ENCODE measurements at regions of chr15 and their contacts with region 1.

Region 1: GRCh38 chr15:100111103-100112060 is 230.4 kb downstream of the ADAMTS17 start:
- DNase-seq: peak; percentile 76
- H3K4me3 Mint-ChIP-seq: peak overlapping the region; percentile 44
- H3K27ac Mint-ChIP-seq: peak overlapping the region; percentile 98
- H3K4me1 Mint-ChIP-seq: peaks cover 41% of the 10 kb centered on the region
- H3K27me3 Mint-ChIP-seq: no peaks in the 10 kb centered on the region

Region 2: GRCh38 chr15:98927022-98927421 is 1184.4 kb before region 1 on chr15:
- CTCF ChIA-PET with region 1: no interaction called
- intact Hi-C with region 1: no loop called
- DNase-seq: no peak
- H3K4me3 Mint-ChIP-seq: no peak overlapping the region
- H3K27ac Mint-ChIP-seq: no peak overlapping the region
- H3K4me1 Mint-ChIP-seq: no peaks in the 10 kb centered on the region
- H3K27me3 Mint-ChIP-seq: no peaks in the 10 kb centered on the region

Region 3: DNA sequence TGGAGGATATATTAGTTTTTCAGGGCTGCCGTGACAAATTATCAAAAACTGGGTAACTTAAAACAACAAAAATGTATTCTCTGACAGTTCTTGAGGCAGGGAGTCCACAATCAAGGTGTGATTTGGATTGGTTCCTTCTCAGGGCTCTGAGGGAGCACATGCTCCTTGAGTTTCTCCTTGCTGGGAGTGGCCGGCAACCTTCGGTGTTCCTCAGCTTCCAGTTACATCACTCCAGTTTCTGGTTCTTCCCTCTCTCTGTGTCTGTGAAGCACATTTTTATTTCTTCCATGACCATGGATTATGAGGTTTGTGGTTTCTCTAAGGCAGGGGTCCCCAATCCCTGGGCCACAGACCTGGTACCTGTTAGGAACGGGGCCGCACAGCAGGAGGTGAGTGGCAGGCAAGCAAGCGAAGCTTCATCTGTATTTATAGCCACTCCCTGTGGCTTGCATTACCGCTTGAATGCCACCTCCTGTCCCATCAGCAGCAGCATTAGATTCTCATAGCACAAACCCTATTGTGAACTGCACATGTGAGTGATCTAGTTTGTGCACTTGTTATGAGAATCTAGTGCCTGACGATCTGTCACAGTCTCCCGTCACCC is 835.8 kb before region 1 on chr15:
- CTCF ChIA-PET with region 1: no interaction called
- intact Hi-C with region 1: loop called (anchors 5 kb)
- DNase-seq: no peak
- H3K4me3 Mint-ChIP-seq: no peak overlapping the region
- H3K27ac Mint-ChIP-seq: no peak overlapping the region
- H3K4me1 Mint-ChIP-seq: peaks cover 27% of the 10 kb centered on the region
- H3K27me3 Mint-ChIP-seq: no peaks in the 10 kb centered on the region

Region 4: GRCh38 chr15:99826157-99826780 is 285.1 kb before region 1 on chr15:
- CTCF ChIA-PET with region 1: no interaction called
- intact Hi-C with region 1: loop called (anchors 5 kb)
- DNase-seq: peak; percentile 58
- H3K4me3 Mint-ChIP-seq: peak overlapping the region; percentile 22
- H3K27ac Mint-ChIP-seq: peak overlapping the region; percentile 93
- H3K4me1 Mint-ChIP-seq: peaks cover 53% of the 10 kb centered on the region
- H3K27me3 Mint-ChIP-seq: no peaks in the 10 kb centered on the region

Region 5: DNA sequence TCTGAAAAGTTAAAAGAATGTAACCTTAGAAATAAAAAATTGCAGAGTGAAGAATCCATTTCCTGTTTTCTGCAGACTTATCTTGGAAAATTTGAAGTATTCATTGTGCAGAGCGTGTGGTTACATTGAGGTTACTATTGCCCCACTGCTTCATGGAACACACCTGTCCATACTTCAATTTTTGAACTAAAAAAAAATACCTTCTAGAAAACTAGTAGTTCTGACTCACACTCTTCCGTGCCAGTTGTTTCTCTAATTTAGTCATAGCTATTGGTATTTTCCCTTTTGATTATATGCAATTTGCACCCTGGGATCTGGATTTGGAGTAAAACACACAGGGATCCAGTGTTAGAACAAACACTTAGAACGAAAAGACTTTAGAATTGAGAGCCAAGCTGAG is 266.4 kb before region 1 on chr15:
- CTCF ChIA-PET with region 1: no interaction called
- intact Hi-C with region 1: loop called (anchors 5 kb)
- DNase-seq: peak; percentile 66
- H3K4me3 Mint-ChIP-seq: no peak overlapping the region
- H3K27ac Mint-ChIP-seq: peak overlapping the region; percentile 62
- H3K4me1 Mint-ChIP-seq: peaks cover 57% of the 10 kb centered on the region
- H3K27me3 Mint-ChIP-seq: no peaks in the 10 kb centered on the region

Region 6: DNA sequence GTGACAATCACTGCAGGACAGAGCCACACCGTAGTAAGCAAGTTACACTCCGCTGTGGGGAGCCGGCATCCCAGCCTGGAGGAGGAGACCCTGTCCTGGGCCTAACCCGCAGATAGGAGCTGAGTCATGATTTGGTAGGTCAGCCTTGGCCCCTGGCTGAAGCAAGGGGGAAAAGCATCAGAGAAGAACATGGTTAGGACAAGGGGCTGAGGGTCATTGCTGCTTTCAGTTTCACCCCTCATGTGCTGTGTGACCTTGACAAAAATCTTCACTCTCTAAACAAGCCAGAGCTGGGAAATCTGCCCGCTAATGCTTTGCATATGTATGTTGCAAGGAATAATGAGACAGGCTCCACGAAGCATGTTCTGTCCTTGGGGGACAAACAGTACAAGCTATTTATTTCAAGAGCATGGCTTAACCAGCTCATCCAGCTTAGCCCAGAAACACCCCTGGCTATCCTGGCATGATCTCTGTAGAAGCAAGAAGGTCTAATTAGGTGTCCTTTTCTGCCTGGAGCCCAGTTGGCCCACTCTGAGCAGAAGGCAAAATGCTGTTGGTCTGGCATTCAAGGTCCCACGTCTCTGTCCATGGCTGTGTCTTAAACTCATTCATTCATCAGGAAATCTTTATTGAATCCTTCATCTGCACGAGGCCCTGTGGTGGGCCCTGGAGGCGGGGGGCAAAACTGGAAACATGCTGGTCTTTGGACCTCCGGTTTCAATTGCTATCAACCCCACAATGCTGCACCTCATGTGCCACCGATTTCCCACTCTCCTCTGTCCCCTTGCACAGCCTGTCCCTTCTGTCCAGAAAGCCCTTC is 156.8 kb before region 1 on chr15:
- CTCF ChIA-PET with region 1: no interaction called
- intact Hi-C with region 1: loop called (anchors 5 kb)
- DNase-seq: no peak
- H3K4me3 Mint-ChIP-seq: no peak overlapping the region
- H3K27ac Mint-ChIP-seq: no peak overlapping the region
- H3K4me1 Mint-ChIP-seq: peaks cover 14% of the 10 kb centered on the region
- H3K27me3 Mint-ChIP-seq: peaks cover 2% of the 10 kb centered on the region

Region 7: DNA sequence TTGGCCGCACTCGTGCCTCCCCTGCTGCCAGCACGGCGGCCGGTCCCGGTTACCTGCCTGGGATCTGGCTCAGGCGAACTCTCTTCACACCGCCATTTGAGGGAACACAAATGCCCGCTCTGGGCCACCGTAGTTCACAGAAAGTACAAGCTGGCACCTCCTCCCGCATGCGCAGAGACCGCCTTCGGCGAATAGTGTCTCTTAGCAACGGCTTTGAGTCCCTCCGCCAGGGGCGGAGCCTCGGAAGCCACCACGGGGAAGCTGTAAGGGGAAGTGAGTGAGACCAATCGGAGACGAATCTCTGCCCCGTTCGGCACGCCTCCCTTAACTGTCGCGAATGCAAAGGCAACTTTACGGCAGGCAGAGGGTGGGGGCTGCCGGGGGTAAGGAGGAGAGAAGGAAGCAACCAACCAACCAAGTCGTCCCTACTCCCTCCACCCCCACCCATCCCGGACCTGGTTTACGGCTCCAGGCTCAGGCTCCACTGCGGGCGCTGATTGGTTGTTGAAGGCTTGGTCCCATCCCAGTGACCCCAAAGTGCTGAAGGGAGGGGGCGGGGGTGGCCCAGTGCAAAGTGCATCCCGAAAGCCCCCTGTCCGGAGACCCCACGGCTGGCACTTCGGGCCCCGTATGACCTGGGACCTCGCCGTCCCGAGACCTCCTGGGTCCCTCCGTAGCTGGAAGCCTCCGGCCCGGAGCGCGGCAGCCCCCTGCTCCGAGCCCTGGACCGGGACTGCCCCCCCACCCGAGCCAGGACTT is 490.9 kb after region 1 on chr15 and contains the starts of genes ASB7 and LINS1:
- CTCF ChIA-PET with region 1: no interaction called
- intact Hi-C with region 1: loop called (anchors 1 kb)
- DNase-seq: peak; percentile 99
- H3K4me3 Mint-ChIP-seq: no peak within 1 kb of the TSS
- H3K27ac Mint-ChIP-seq: no peak within 1 kb of the TSS
- H3K4me1 Mint-ChIP-seq: peaks cover 56% of the 10 kb centered on the region
- H3K27me3 Mint-ChIP-seq: no peaks in the 10 kb centered on the region
- total RNA-seq, gene ASB7: 15.6 to 16.8 TPM
- total RNA-seq, gene LINS1: 36.8 to 37.1 TPM

Measured in activated naive CD4-positive, alpha-beta T cell treated with anti-CD3 and anti-CD28 coated beads for 36 hours (primary cell).